ENCODE measurements at regions of chr2 and their contacts with region 1.

Region 1: GRCh38 chr2:174603280-174603679 is 5.7 kb upstream of the WIPF1 start:
- DNase-seq: peak in 7 of 9 donors; percentile 47 to 67 (median 58)
- ATAC-seq: peak; percentile 79
- H3K4me3 ChIP-seq: no peak overlapping the region
- H3K4me3 Mint-ChIP-seq: peak overlapping the region in 8 of 10 donors; percentile 7 to 87 (median 26)
- H3K27ac ChIP-seq: peak overlapping the region; percentile 46
- H3K27ac Mint-ChIP-seq: peak overlapping the region; percentile 77 to 98 (median 93)
- H3K4me1 ChIP-seq: peaks cover 57 to 75% of the 10 kb centered on the region in 2 donors
- H3K4me1 Mint-ChIP-seq: peaks cover 70 to 97% (median 94%) of the 10 kb centered on the region in 7 donors
- H3K27me3 ChIP-seq: no peaks in the 10 kb centered on the region
- H3K27me3 Mint-ChIP-seq: no peaks in the 10 kb centered on the region

Region 2: GRCh38 chr2:174553811-174554493 is 49.3 kb before region 1 on chr2:
- CTCF ChIA-PET with region 1: no interaction called
- POLR2A ChIA-PET with region 1: interaction called, 4 read pairs
- intact Hi-C with region 1: loop called in 1 of 2 experiments (anchors 10 kb)
- DNase-seq: peak in 2 of 9 donors; percentile 11
- ATAC-seq: peak; percentile 66
- H3K4me3 ChIP-seq: peak overlapping the region; percentile 20
- H3K4me3 Mint-ChIP-seq: peak overlapping the region in 8 of 10 donors; percentile 2 to 58 (median 41)
- H3K27ac ChIP-seq: peak overlapping the region; percentile 58
- H3K27ac Mint-ChIP-seq: peak overlapping the region; percentile 51 to 91 (median 85)
- H3K4me1 ChIP-seq: peaks cover 22 to 27% of the 10 kb centered on the region in 2 donors
- H3K4me1 Mint-ChIP-seq: peaks cover 15 to 54% (median 47%) of the 10 kb centered on the region in 7 donors
- H3K27me3 ChIP-seq: no peaks in the 10 kb centered on the region
- H3K27me3 Mint-ChIP-seq: no peaks in the 10 kb centered on the region

Region 3: GRCh38 chr2:174577967-174578589 is 25.2 kb before region 1 on chr2:
- CTCF ChIA-PET with region 1: interaction called, 20 read pairs
- POLR2A ChIA-PET with region 1: interaction called, 277 read pairs
- intact Hi-C with region 1: loop called (anchors 1 kb)
- DNase-seq: peak in 7 of 9 donors; percentile 55 to 77 (median 68)
- ATAC-seq: peak; percentile 86
- H3K4me3 ChIP-seq: no peak overlapping the region
- H3K4me3 Mint-ChIP-seq: peak overlapping the region in 1 of 10 donors; percentile 27
- H3K27ac ChIP-seq: peak overlapping the region; percentile 33
- H3K27ac Mint-ChIP-seq: peak overlapping the region in 8 of 9 donors; percentile 46 to 91 (median 81)
- H3K4me1 ChIP-seq: peaks cover 56 to 74% of the 10 kb centered on the region in 2 donors
- H3K4me1 Mint-ChIP-seq: peaks cover 31 to 91% (median 77%) of the 10 kb centered on the region in 7 donors
- H3K27me3 ChIP-seq: no peaks in the 10 kb centered on the region
- H3K27me3 Mint-ChIP-seq: no peaks in the 10 kb centered on the region

Region 4: DNA sequence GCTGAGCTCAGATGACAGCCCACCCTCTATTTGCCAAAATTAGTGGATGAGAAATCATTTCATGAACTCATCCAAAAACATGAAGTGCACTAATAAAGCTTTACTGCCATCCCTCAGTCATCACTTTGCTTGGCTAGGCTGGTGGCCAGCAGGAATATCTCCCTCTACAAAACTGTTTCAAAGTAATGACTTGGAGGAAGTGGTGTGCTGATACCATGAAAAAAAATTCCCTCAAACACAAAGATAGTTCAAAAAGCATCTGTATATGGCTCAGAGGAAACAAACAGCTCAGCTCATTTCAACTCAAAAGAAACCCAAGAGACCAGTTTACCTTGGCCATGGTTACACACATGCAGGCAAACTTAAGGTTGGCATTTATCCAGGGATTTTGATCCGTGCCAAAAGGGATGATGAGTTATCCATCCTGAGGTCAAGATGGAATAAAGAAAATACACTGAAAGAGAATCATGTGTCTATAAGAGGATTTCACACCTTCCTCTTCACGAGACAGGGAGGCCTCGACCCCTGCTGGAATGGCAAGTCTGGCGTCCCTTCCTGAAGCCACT is 12.7 kb after region 1 on chr2:
- CTCF ChIA-PET with region 1: interaction called, 11 read pairs
- POLR2A ChIA-PET with region 1: interaction called, 102 read pairs
- intact Hi-C with region 1: loop called (anchors 1 kb)
- DNase-seq: peak in 2 of 9 donors; percentile 34 to 40
- ATAC-seq: peak; percentile 76
- H3K4me3 ChIP-seq: no peak overlapping the region
- H3K4me3 Mint-ChIP-seq: peak overlapping the region in 9 of 10 donors; percentile 29 to 76 (median 48)
- H3K27ac ChIP-seq: peak overlapping the region; percentile 46
- H3K27ac Mint-ChIP-seq: peak overlapping the region; percentile 9 to 92 (median 83)
- H3K4me1 ChIP-seq: peaks cover 50 to 57% of the 10 kb centered on the region in 2 donors
- H3K4me1 Mint-ChIP-seq: peaks cover 60 to 100% (median 94%) of the 10 kb centered on the region in 7 donors
- H3K27me3 ChIP-seq: no peaks in the 10 kb centered on the region
- H3K27me3 Mint-ChIP-seq: no peaks in the 10 kb centered on the region

Region 5: DNA sequence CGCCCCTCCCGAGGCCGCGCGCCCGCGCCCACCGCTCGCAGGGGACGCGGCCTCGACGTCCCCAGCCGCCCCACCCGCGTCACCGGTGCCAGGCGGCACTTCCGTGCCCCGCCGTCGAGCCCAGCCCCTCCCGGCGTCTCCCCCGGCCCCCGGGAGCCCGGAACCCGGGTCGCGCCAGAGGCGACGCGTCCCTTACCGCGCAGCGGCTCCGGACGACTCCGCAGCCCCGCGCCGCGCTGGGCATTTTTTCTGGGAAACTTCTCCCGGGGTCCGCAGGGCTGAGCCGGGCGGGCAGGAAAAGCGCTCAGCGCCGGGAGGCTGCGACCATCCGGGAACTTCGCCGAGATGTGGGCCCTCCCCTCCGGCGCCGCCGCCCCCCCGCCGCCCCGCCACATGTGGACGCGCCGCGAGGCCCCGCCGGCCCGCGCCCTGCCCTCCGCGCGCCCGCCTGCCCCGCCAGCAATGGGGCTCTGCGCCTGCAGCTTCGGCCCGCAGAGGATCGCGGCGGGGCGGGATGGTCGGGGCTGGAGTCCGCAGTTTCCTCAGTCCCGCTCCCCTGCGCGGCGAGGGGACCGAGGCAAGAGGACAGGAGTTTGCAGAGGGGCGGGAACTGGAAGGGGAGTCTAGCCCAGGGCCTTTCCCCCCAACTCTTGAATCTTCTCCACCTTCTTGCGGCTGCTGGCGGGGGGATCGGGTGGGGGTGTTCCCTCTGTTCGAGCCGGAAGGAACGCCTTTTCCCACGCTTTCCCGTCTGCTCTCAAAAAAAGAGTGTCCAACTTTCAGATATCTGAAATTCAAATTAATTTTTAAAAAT is 79.5 kb after region 1 on chr2:
- CTCF ChIA-PET with region 1: interaction called, 223 read pairs
- POLR2A ChIA-PET with region 1: interaction called, 62 read pairs
- intact Hi-C with region 1: loop called (anchors 1 kb)
- DNase-seq: peak; percentile 56 to 73 (median 71)
- ATAC-seq: peak; percentile 78
- H3K4me3 ChIP-seq: peak overlapping the region; percentile 72
- H3K4me3 Mint-ChIP-seq: peak overlapping the region; percentile 92 to 99 (median 96)
- H3K27ac ChIP-seq: peak overlapping the region; percentile 88
- H3K27ac Mint-ChIP-seq: peak overlapping the region; percentile 91 to 98 (median 96)
- H3K4me1 ChIP-seq: peaks cover 11% of the 10 kb centered on the region in 2 donors
- H3K4me1 Mint-ChIP-seq: peaks cover 34 to 69% (median 61%) of the 10 kb centered on the region in 7 donors
- H3K27me3 ChIP-seq: no peaks in the 10 kb centered on the region
- H3K27me3 Mint-ChIP-seq: no peaks in the 10 kb centered on the region

Region 6: GRCh38 chr2:174688079-174688478 is 84.8 kb after region 1 on chr2:
- CTCF ChIA-PET with region 1: interaction called, 223 read pairs
- POLR2A ChIA-PET with region 1: interaction called, 62 read pairs
- intact Hi-C with region 1: loop called (anchors 1 kb)
- DNase-seq: peak in 6 of 9 donors; percentile 36 to 63 (median 45)
- ATAC-seq: peak; percentile 73
- H3K4me3 ChIP-seq: no peak overlapping the region
- H3K4me3 Mint-ChIP-seq: peak overlapping the region in 1 of 10 donors; percentile 40
- H3K27ac ChIP-seq: no peak overlapping the region
- H3K27ac Mint-ChIP-seq: peak overlapping the region in 7 of 9 donors; percentile 14 to 82 (median 21)
- H3K4me1 ChIP-seq: peaks cover 0 to 6% of the 10 kb centered on the region in 2 donors
- H3K4me1 Mint-ChIP-seq: peaks cover 19 to 45% (median 30%) of the 10 kb centered on the region in 7 donors
- H3K27me3 ChIP-seq: no peaks in the 10 kb centered on the region
- H3K27me3 Mint-ChIP-seq: peaks cover 0 to 6% (median 0%) of the 10 kb centered on the region in 5 donors

Measured in naive thymus-derived CD4-positive, alpha-beta T cell (primary cell).